ENCODE measurements at regions of chr1 and their contacts with region 1.

Region 1: GRCh38 chr1:39919545-39919944 is 17.8 kb upstream of the MYCL start:
- DNase-seq: no peak
- ATAC-seq: peak; percentile 33 to 78 (median 66)
- H3K4me3 ChIP-seq: no peak overlapping the region
- H3K27ac ChIP-seq: no peak overlapping the region
- H3K4me1 ChIP-seq: peaks cover 0 to 7% (median 4%) of the 10 kb centered on the region in 9 donors
- H3K27me3 ChIP-seq: peaks cover 0 to 46% (median 17%) of the 10 kb centered on the region in 7 donors
- CTCF ChIP-seq: peak in 8 of 9 donors; percentile 22 to 65 (median 52)

Region 2: DNA sequence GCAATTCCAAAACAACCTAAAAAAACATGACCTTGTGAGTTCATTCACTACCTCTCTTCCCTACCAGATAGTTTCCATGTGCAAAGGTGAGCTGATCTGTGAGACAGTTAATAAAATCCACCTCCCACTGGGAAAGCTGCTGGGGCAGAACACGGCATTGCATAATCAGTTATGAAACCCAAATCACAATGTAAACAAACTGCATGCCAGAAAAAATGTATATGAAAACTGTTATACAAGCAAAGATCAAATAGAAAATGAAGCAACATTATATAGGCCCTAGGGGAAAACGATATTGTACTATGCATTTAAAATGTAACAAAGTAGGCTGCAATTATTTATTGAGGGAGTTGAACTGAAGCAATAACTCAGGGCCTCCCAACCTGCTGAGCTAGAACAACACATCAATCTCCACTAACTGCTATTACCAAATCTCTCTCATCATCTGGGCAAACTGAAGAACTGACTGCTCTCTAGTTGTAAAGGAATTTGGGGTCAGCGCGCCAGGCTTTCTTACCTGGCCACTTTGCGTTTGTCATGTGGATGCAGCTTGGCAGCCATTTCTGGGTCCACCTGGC is 67.2 kb before region 1 on chr1:
- intact Hi-C with region 1: no loop called
- DNase-seq: no peak
- ATAC-seq: no peak
- H3K4me3 ChIP-seq: no peak overlapping the region
- H3K27ac ChIP-seq: no peak overlapping the region
- H3K4me1 ChIP-seq: peaks cover 0 to 3% (median 0%) of the 10 kb centered on the region in 9 donors
- H3K27me3 ChIP-seq: no peaks in the 10 kb centered on the region
- CTCF ChIP-seq: no peak

Region 3: GRCh38 chr1:40032240-40032891 is 112.8 kb after region 1 on chr1:
- intact Hi-C with region 1: loop called in 2 of 10 experiments (anchors 10 kb)
- DNase-seq: peak in 1 of 2 donors; percentile 41
- ATAC-seq: peak in 2 of 8 donors; percentile 22 to 54
- H3K4me3 ChIP-seq: no peak overlapping the region
- H3K27ac ChIP-seq: no peak overlapping the region
- H3K4me1 ChIP-seq: peaks cover 0 to 43% (median 25%) of the 10 kb centered on the region in 9 donors
- H3K27me3 ChIP-seq: no peaks in the 10 kb centered on the region
- CTCF ChIP-seq: peak; percentile 29 to 83 (median 72)